Breast epithelium (tissue), 4 donors: ENCODE measurements at regions of chr1 and their contacts with region 1.

Region 1: DNA sequence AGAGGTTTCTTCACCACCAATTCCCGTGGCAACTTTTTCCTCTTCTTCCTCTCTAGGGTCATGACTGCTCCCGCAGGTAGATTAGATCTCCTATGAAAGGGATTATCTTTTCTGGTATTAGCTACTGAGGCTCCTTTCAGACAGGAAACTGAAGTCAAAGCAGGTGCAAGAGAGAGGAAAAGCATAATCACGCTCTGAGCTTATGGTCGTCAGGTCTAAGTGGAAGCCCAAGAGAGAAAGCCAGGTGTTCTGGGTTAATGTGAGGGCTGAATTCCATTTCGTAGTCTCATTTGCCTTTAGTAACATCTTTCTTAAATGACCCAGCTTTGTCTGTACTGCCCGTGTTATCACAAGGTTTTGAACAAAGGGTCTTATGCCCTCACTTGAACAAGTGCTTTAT is 8.3 kb upstream of the MAP3K21 start:
- DNase-seq: no peak
- H3K4me3 ChIP-seq: no peak overlapping the region
- H3K27ac ChIP-seq: no peak overlapping the region
- H3K4me1 ChIP-seq: no peaks in the 10 kb centered on the region
- H3K27me3 ChIP-seq: no peaks in the 10 kb centered on the region
- CTCF ChIP-seq: no peak
- POLR2A ChIP-seq: no peak

Region 2: DNA sequence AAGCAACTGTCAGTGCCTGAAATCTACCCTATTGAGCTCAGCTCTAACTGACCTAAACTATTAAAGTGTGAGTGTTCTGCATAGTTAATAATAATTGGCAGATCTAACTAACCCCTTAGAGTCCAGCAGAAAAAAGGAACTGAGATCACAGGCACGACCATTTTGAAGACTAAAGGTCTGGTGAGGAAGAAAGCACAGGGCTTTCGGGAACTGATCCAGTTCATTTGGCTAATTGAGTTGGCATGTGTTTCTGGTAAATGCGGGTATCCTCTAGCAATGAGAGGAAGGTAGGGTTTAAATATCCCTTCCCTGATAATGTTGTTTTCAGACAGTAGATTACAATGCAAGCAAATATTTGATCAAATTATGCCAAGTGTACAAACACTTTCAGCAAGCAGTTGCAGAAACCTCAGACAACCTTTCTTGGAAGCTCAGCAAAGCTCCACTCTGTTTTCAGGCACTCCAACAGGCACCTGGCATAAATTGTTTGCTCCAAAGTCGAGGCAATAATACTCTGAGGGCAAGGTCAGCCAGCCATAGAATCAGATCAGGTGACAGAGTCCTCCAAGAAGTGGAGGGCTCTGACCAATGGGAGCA is 395.5 kb after region 1 on chr1:
- intact Hi-C with region 1: loop called (anchors 10 kb)
- DNase-seq: no peak
- H3K4me3 ChIP-seq: no peak overlapping the region
- H3K27ac ChIP-seq: no peak overlapping the region
- H3K4me1 ChIP-seq: no peaks in the 10 kb centered on the region
- H3K27me3 ChIP-seq: no peaks in the 10 kb centered on the region
- CTCF ChIP-seq: no peak
- POLR2A ChIP-seq: no peak